Gastrocnemius medialis (tissue), 4 donors: ENCODE measurements at regions of chr3 and their contacts with region 1.

Region 1: GRCh38 chr3:56251343-56251945 is 216.8 kb downstream of the ERC2 start:
- DNase-seq: peak in 1 of 2 donors; percentile 12
- ATAC-seq: peak in 1 of 2 donors; percentile 46
- H3K4me3 ChIP-seq: no peak overlapping the region
- H3K27ac ChIP-seq: no peak overlapping the region
- H3K4me1 ChIP-seq: no peaks in the 10 kb centered on the region
- H3K27me3 ChIP-seq: no peaks in the 10 kb centered on the region
- CTCF ChIP-seq: peak; percentile 8 to 75 (median 60)
- POLR2A ChIP-seq: no peak

Region 2: GRCh38 chr3:54830658-54831057 is 1420.8 kb before region 1 on chr3:
- in situ Hi-C with region 1: loop called in 1 of 4 experiments (anchors 25 kb)
- intact Hi-C with region 1: no loop called
- DNase-seq: no peak
- ATAC-seq: no peak
- H3K4me3 ChIP-seq: no peak overlapping the region
- H3K27ac ChIP-seq: no peak overlapping the region
- H3K4me1 ChIP-seq: peaks cover 12 to 15% of the 10 kb centered on the region in 2 donors
- H3K27me3 ChIP-seq: no peaks in the 10 kb centered on the region
- CTCF ChIP-seq: peak in 2 of 5 experiments; percentile 16 to 32
- POLR2A ChIP-seq: no peak

Region 3: DNA sequence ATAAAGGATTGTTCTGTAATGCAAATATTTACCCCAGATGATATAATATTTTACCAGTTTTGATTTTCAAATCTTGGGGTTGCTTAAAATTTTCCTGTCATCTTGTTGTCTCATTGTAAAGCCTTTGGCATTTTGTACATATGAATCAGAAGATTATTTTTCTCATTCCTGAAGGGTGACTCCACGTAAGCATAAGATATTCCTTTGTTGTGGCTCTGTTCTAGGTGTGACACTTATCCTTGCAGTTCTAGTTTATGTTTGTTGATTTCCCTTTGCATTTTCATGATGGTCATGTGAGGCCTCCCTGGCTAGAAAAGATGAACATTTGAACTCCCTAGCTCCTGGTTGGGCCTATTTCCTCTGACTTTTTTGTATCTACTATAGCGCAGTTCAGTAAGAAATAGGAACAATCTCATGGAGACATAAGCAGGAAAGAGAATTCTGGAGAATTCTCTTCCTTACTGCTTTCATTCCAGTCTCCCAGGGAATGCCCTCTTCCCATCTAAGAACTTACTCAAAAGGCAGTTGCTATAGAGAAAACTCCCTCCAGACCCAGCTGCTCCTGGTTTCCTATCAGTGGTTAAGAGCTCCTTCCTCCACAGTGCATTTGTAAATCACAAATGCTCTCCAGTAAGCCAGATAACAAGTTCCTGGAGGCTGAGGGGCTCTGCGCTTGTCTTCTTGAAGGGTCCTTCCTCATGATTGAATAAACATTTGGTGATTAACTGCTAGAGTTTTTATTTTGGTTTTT is 889.1 kb before region 1 on chr3:
- in situ Hi-C with region 1: no loop called
- intact Hi-C with region 1: no loop called
- DNase-seq: no peak
- ATAC-seq: no peak
- H3K4me3 ChIP-seq: no peak overlapping the region
- H3K27ac ChIP-seq: no peak overlapping the region
- H3K4me1 ChIP-seq: no peaks in the 10 kb centered on the region
- H3K27me3 ChIP-seq: no peaks in the 10 kb centered on the region
- CTCF ChIP-seq: no peak
- POLR2A ChIP-seq: no peak